ENCODE measurements at regions of chr7 and their contacts with region 1.

Region 1: DNA sequence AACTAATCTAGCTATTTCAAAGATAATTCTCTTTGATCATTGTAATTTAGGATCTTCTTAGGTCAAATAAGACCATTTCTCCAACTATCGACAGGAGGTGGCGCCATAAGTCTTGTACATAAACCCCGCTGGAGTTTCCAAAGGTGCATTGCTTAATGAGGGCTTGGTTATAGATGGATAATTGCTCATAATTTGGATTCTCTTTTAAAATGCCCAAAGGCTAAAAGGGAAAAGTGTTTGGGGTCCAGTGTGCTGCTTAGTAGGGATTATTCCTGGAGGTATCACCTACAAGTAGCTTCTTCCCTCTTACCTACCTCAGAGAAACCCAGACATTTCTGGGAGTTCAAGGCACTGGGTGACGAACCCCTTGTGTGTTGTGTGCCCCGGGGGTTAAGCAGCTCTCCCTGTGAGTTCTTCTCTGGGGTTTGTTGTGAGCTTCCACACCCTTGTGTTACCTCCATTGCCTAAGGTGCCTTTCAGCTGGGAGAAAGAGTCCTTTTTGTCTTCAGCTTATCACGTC is 75.2 kb downstream of the PAXIP1 start:
- DNase-seq: peak; percentile 56 to 86 (median 77)
- ATAC-seq: peak; percentile 87
- H3K4me3 ChIP-seq: peak overlapping the region; percentile 89
- H3K27ac ChIP-seq: peak overlapping the region; percentile 86
- H3K4me1 ChIP-seq: no peaks in the 10 kb centered on the region
- H3K27me3 ChIP-seq: no peaks in the 10 kb centered on the region

Region 2: DNA sequence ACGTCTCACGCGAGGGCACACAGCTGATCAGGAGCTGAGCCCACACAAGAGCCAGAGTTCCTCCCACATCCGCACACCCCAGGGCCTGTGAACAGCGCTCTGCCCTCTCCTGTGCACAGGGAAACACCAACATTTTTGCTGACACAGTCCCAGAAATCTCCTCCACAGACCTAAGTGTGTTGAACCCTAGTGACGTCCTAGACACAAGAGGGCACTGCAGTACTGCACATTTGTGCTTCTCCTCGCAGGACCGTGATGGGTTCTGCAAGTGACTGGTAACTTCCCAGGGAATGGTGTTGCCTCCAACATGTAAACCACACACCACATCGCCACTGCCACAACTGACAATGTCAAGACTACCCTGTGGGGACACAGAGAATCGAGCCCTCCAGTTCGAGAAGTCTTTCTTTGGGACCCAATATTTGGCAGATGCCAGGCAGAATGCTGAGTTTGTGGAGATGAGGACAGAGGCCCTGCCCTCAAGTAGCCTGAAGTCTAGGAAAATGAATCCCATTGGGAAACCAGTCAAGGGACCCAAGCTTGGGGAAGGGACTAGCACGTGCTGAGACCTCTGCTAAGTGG is 95.0 kb before region 1 on chr7:
- intact Hi-C with region 1: no loop called
- DNase-seq: no peak
- ATAC-seq: peak in 1 of 2 donors; percentile 29
- H3K4me3 ChIP-seq: no peak overlapping the region
- H3K27ac ChIP-seq: no peak overlapping the region
- H3K4me1 ChIP-seq: no peaks in the 10 kb centered on the region
- H3K27me3 ChIP-seq: no peaks in the 10 kb centered on the region

Region 3: DNA sequence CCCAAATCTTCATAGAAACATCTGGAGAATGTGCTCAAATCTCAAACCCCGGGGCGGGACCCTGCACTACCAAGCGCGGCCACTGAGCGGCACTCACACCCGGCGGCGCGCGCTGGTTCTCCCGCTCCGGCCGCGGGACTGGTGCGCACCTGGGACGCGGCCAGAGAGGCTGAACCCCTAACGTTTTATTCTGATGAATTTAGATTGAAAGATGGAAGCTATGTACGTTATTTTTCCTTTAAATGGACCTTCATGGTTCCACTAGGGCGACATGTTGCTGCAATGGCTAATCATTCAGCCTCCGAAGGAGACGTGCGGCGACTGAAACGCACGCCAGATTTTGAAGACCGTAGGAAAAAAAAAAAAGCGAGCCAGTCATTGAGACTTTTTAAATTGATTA is 263.0 kb after region 1 on chr7:
- intact Hi-C with region 1: loop called in 1 of 4 experiments (anchors 10 kb)
- DNase-seq: peak in 2 of 3 donors; percentile 78 to 82
- ATAC-seq: peak; percentile 59 to 68
- H3K4me3 ChIP-seq: no peak overlapping the region
- H3K27ac ChIP-seq: no peak overlapping the region
- H3K4me1 ChIP-seq: no peaks in the 10 kb centered on the region
- H3K27me3 ChIP-seq: no peaks in the 10 kb centered on the region

Region 4: DNA sequence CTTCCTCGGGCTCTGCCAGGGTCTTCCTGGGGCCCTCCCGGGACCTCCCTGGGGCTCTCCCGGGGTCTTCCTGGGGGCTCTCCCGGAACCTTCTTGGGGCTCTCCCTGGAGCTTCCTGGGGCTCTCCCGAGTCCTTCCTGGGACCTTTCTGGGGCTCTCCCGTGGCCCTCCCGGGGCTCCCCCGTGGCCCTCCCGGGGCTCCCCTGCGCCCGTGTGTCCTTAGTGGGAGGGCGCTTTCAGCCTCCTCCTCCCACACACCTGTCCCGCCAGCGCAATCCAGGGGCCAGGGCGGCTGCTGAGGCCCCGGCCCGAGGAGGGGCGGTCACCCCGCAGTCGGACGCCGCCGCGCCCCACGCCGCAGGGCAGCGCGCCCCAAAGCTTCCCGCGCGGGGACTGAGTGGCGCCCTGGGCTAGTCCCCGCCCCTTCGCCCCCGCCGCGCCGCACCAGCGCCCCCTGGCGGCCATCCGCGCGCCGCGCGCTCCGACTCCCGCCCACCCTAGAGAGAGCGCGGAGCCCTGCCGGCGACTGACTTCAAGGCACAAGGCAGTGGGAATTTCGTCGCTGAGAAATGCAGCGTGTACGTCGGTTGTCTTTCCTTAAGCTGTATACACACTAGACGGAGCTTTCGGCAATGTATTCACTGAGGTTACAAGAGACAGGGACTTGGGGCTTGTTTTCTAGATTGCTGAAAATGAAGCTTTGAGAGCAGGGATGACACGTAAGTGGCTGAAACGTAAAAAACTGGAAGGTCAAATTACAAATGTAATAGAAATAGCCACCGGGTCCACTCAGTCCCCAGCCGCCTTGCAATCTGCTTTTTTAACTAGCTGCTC is 417.1 kb after region 1 on chr7:
- intact Hi-C with region 1: loop called in 2 of 4 experiments (anchors 2 to 5 kb)
- DNase-seq: peak; percentile 78 to 93 (median 91)
- ATAC-seq: peak; percentile 96 to 98
- H3K4me3 ChIP-seq: peak overlapping the region; percentile 12
- H3K27ac ChIP-seq: no peak overlapping the region
- H3K4me1 ChIP-seq: no peaks in the 10 kb centered on the region
- H3K27me3 ChIP-seq: no peaks in the 10 kb centered on the region

Measured in right cardiac atrium (tissue), 5 donors.